Sigmoid colon (tissue), 7 donors: ENCODE measurements at regions of chr22 and their contacts with region 1.

Region 1: GRCh38 chr22:40679964-40680818 is 907 bp downstream of the MCHR1 start:
- DNase-seq: no peak
- H3K4me3 ChIP-seq: peak overlapping the region in 1 of 4 donors; percentile 4
- H3K27ac ChIP-seq: no peak overlapping the region
- H3K4me1 ChIP-seq: peaks cover 0 to 25% (median 17%) of the 10 kb centered on the region in 4 donors
- H3K27me3 ChIP-seq: peaks cover 4 to 11% (median 5%) of the 10 kb centered on the region in 3 donors
- CTCF ChIP-seq: no peak
- EP300 ChIP-seq: no peak
- POLR2A ChIP-seq: no peak

Region 2: DNA sequence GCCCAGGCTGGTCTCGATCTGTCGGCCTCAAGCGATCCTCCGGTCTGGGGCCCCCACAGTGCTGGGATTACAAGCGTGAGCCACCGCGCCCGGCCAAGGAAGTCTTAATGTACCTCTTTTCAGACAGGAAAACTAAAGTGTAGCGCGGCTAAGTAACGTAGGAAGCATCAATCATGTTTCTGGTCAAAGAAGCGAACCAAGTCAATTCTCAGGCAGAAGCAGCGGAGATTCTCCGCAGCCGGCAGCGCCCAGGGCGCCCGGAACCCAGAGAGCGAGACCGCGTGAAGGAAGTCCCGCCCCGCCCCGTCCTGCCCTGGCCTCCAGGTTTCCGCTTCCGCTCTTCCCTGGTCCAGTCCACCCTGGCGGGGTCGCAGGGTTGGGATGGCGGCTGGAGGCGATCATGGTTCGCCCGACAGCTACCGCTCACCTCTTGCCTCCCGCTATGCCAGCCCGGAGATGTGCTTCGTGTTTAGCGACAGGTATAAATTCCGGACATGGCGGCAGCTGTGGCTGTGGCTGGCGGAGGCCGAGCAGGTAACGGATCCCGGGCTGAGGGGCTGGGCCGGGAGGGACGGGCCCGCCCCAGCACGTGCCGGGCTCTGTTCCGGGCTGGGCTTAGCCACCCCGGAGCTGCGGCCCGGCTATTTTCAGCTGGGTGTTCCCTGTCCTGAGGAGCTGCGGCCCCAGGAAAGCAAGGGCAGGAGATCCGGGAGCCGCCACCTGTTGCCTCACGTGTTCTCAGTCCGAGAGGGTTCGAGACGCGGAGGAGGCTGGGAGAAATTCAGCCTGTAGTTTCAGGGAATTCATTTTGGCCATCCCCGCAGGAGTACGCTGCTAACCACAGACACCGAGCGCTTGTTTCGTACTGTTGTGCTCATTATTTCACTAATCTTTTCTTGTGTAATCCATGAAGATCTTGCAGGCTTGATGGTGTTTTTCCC is 333.7 kb before region 1 on chr22 and contains the start of gene ADSL:
- intact Hi-C with region 1: no loop called
- DNase-seq: peak; percentile 93
- H3K4me3 ChIP-seq: peak within 1 kb of the TSS; percentile 67 to 73 (median 69)
- H3K27ac ChIP-seq: peak within 1 kb of the TSS; percentile 87 to 90 (median 89)
- H3K4me1 ChIP-seq: peaks cover 0 to 24% (median 21%) of the 10 kb centered on the region in 4 donors
- H3K27me3 ChIP-seq: no peaks in the 10 kb centered on the region
- CTCF ChIP-seq: no peak
- EP300 ChIP-seq: no peak
- POLR2A ChIP-seq: peak; percentile 77 to 79
- total RNA-seq, gene ADSL: 86.7 to 469 (median 111) TPM

Region 3: GRCh38 chr22:40764763-40765441 is 84.7 kb after region 1 on chr22:
- intact Hi-C with region 1: loop called (anchors 1 kb)
- DNase-seq: no peak
- H3K4me3 ChIP-seq: no peak overlapping the region
- H3K27ac ChIP-seq: no peak overlapping the region
- H3K4me1 ChIP-seq: no peaks in the 10 kb centered on the region
- H3K27me3 ChIP-seq: no peaks in the 10 kb centered on the region
- CTCF ChIP-seq: no peak
- EP300 ChIP-seq: no peak
- POLR2A ChIP-seq: no peak

Region 4: DNA sequence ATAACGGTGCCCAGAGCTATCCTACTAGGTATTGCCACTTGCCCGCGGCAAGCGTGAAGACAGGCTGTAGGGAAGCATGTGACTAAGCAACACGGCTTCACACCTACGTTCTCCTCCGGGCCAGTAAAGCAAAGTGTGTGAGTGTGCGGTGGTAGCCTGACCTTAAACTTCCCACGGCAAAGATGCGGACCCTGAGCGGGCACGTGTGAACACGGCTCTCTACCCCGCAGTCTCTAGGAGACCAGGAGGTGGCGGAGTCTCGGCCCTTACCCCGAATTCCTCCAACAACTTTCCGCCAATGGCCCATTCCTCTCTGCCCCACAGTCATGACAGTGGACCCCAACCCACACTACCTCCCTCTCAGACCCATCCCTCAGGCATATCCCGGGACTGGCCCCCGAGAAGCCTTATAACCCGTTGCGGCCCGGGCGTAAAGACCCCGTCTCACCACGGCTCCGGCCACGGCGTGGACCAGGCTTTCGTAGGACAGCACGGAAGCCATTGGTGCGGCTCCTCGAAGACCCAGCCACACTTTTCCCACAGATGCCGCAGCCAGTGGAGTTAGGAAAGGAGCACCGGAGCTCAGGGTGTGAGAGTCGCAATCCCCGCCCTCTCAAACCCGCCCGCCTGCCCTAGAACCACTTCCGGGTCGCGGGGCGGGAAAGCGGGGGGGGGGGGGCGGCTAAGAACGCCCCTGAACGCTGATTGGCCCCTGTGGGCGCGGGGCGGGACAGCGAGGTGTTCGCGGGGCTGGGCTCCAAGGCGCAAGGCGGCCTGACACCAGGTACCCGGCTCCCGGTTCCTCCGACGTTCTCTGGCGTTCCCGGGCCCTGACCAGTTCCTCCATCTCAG is 138.8 kb after region 1 on chr22 and contains the start of gene SLC25A17:
- intact Hi-C with region 1: loop called (anchors 5 kb)
- DNase-seq: peak; percentile 94
- H3K4me3 ChIP-seq: peak within 1 kb of the TSS; percentile 79 to 88 (median 86)
- H3K27ac ChIP-seq: peak within 1 kb of the TSS; percentile 78 to 82 (median 82)
- H3K4me1 ChIP-seq: peaks cover 0 to 29% (median 26%) of the 10 kb centered on the region in 4 donors
- H3K27me3 ChIP-seq: no peaks in the 10 kb centered on the region
- CTCF ChIP-seq: peak; percentile 33 to 53 (median 44)
- EP300 ChIP-seq: no peak
- POLR2A ChIP-seq: peak in 1 of 2 donors; percentile 50
- total RNA-seq, gene SLC25A17: 10.2 to 14.7 (median 11.1) TPM

Region 5: DNA sequence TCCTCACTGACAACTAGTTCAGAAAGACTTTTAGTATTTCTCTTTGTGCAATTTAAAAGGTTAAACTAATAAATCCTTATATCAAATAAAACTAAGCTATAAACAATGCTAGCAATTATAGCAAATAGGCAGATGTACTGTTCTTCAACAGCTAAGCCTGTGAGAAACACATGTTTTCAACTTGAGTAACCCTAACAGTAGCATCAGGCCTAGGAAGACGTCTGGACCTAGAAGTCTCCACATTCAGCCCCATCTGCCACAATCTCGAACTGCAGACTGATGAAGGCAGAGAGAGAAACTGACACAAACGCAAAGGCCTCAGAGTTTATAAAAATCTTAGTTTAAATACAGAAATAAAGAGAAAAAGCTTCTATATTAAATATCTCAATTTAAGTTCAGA is 173.8 kb after region 1 on chr22:
- intact Hi-C with region 1: no loop called
- DNase-seq: no peak
- H3K4me3 ChIP-seq: peak overlapping the region in 1 of 4 donors; percentile 82
- H3K27ac ChIP-seq: peak overlapping the region in 3 of 4 donors; percentile 35 to 99 (median 95)
- H3K4me1 ChIP-seq: peaks cover 0 to 54% (median 53%) of the 10 kb centered on the region in 4 donors
- H3K27me3 ChIP-seq: no peaks in the 10 kb centered on the region
- CTCF ChIP-seq: no peak
- EP300 ChIP-seq: no peak
- POLR2A ChIP-seq: no peak